ENCODE measurements at regions of chr5 and their contacts with region 1.

Region 1: GRCh38 chr5:52693280-52693679 is 94.4 kb upstream of the ITGA1 start:
- DNase-seq: peak; percentile 32
- H3K4me3 ChIP-seq: no peak overlapping the region
- H3K27ac ChIP-seq: no peak overlapping the region
- H3K4me1 ChIP-seq: no peaks in the 10 kb centered on the region
- H3K27me3 ChIP-seq: no peaks in the 10 kb centered on the region
- CTCF ChIP-seq: peak; percentile 61

Region 2: GRCh38 chr5:50889778-50890177 is 1803.5 kb before region 1 on chr5:
- CTCF ChIA-PET with region 1: no interaction called
- POLR2A ChIA-PET with region 1: no interaction called
- intact Hi-C with region 1: no loop called
- DNase-seq: peak; percentile 10
- H3K4me3 ChIP-seq: no peak overlapping the region
- H3K27ac ChIP-seq: no peak overlapping the region
- H3K4me1 ChIP-seq: no peaks in the 10 kb centered on the region
- H3K27me3 ChIP-seq: no peaks in the 10 kb centered on the region
- CTCF ChIP-seq: no peak

Region 3: GRCh38 chr5:52409835-52410234 is 283.4 kb before region 1 on chr5:
- CTCF ChIA-PET with region 1: no interaction called
- POLR2A ChIA-PET with region 1: no interaction called
- intact Hi-C with region 1: no loop called
- DNase-seq: no peak
- H3K4me3 ChIP-seq: no peak overlapping the region
- H3K27ac ChIP-seq: no peak overlapping the region
- H3K4me1 ChIP-seq: peaks cover 22% of the 10 kb centered on the region
- H3K27me3 ChIP-seq: no peaks in the 10 kb centered on the region
- CTCF ChIP-seq: no peak

Region 4: GRCh38 chr5:52767766-52768480 is 74.6 kb after region 1 on chr5:
- CTCF ChIA-PET with region 1: no interaction called
- POLR2A ChIA-PET with region 1: no interaction called
- intact Hi-C with region 1: loop called (anchors 5 kb)
- DNase-seq: no peak
- H3K4me3 ChIP-seq: no peak overlapping the region
- H3K27ac ChIP-seq: no peak overlapping the region
- H3K4me1 ChIP-seq: no peaks in the 10 kb centered on the region
- H3K27me3 ChIP-seq: no peaks in the 10 kb centered on the region
- CTCF ChIP-seq: no peak

Region 5: GRCh38 chr5:52915176-52915875 is 222.0 kb after region 1 on chr5:
- CTCF ChIA-PET with region 1: interaction called, 3 read pairs
- POLR2A ChIA-PET with region 1: no interaction called
- intact Hi-C with region 1: loop called (anchors 1 kb)
- DNase-seq: peak; percentile 80
- H3K4me3 ChIP-seq: peak overlapping the region; percentile 41
- H3K27ac ChIP-seq: no peak overlapping the region
- H3K4me1 ChIP-seq: no peaks in the 10 kb centered on the region
- H3K27me3 ChIP-seq: no peaks in the 10 kb centered on the region
- CTCF ChIP-seq: peak; percentile 90

Measured in A673 (cell line).